Breast epithelium (tissue), 4 donors: ENCODE measurements at regions of chr12 and their contacts with region 1.

Region 1: GRCh38 chr12:46049665-46050064 is 59.3 kb upstream of the SCAF11 start:
- DNase-seq: no peak
- H3K4me3 ChIP-seq: no peak overlapping the region
- H3K27ac ChIP-seq: no peak overlapping the region
- H3K4me1 ChIP-seq: no peaks in the 10 kb centered on the region
- H3K27me3 ChIP-seq: no peaks in the 10 kb centered on the region
- CTCF ChIP-seq: no peak
- POLR2A ChIP-seq: no peak

Region 2: DNA sequence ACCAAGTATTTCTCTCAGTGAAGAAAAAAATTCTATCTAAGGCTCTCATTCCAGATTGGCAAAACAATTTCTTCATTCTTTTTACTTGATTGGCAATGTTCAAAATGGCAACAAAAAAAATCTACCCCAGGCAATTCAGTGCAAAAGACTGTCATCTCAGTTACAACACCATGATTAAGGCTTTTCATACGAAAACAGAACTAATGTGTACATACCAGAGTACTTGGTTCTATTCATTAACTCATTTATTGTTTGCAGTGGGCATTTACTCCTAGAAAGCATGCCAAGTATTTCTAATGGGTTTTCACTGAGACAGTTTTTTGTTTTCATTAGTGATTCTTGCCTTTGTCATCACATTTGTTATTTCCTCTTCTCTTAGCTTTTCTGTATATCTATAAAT is 1031.7 kb before region 1 on chr12:
- intact Hi-C with region 1: no loop called
- DNase-seq: no peak
- H3K4me3 ChIP-seq: no peak overlapping the region
- H3K27ac ChIP-seq: no peak overlapping the region
- H3K4me1 ChIP-seq: no peaks in the 10 kb centered on the region
- H3K27me3 ChIP-seq: no peaks in the 10 kb centered on the region
- CTCF ChIP-seq: no peak
- POLR2A ChIP-seq: no peak

Region 3: GRCh38 chr12:45973526-45973925 is 76.1 kb before region 1 on chr12:
- intact Hi-C with region 1: no loop called
- DNase-seq: no peak
- H3K4me3 ChIP-seq: no peak overlapping the region
- H3K27ac ChIP-seq: no peak overlapping the region
- H3K4me1 ChIP-seq: no peaks in the 10 kb centered on the region
- H3K27me3 ChIP-seq: no peaks in the 10 kb centered on the region
- CTCF ChIP-seq: no peak
- POLR2A ChIP-seq: no peak

Region 4: DNA sequence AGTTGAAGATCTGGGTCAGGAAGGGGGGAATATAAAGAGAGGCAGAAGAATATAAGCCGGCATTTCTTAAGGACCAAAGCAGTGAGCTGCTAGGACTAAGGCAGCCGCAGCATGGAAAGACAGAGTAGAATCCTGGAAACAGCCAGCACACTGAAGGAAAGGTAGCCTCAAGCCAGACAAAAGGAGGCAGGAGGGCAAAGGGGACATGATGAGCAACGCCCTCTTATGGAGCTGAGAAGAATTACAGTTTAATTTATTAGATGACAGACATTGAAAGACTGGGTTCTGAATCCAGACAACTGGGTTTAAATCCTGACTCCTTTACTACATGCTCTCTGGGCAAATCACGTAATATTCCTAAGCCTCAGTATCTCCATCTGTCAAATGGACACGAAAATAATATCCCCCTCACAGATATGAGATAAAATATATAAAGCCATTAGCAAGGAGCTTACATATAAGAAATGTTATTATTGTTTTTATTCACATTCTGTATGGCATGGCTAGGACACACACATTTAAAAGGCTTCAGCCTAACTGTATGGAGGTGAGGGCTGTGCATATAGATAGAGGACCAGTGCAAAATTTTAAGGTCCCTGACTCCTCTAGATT is 1021.7 kb after region 1 on chr12:
- intact Hi-C with region 1: loop called (anchors 5 kb)
- DNase-seq: no peak
- H3K4me3 ChIP-seq: no peak overlapping the region
- H3K27ac ChIP-seq: no peak overlapping the region
- H3K4me1 ChIP-seq: no peaks in the 10 kb centered on the region
- H3K27me3 ChIP-seq: no peaks in the 10 kb centered on the region
- CTCF ChIP-seq: no peak
- POLR2A ChIP-seq: no peak